ENCODE measurements at regions of chr10 and their contacts with region 1.

Region 1: DNA sequence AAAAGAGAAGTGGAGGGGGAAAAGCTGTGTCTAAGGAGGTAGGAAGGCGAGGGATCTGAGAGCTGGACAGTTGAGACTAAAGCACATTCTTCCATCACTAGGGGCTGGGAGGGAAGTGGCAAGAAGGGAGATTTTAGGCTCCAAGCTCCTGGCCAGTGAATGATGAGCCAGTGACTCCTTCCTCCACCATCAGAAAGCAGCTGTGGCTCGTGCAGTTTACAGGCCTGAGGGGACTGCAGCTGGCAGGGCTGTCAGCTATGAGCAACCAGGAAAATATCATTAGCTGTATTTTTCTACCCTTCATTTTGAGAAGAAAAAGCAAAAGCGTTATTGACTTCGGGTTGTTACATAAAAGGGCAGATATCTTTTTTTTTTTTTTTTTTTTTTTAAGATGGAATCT is 60.7 kb downstream of the GPAM start:
- DNase-seq: no peak
- ATAC-seq: no peak
- H3K4me3 ChIP-seq: no peak overlapping the region
- H3K27ac ChIP-seq: no peak overlapping the region
- H3K4me1 ChIP-seq: no peaks in the 10 kb centered on the region
- H3K27me3 ChIP-seq: no peaks in the 10 kb centered on the region
- CTCF ChIP-seq: no peak

Region 2: DNA sequence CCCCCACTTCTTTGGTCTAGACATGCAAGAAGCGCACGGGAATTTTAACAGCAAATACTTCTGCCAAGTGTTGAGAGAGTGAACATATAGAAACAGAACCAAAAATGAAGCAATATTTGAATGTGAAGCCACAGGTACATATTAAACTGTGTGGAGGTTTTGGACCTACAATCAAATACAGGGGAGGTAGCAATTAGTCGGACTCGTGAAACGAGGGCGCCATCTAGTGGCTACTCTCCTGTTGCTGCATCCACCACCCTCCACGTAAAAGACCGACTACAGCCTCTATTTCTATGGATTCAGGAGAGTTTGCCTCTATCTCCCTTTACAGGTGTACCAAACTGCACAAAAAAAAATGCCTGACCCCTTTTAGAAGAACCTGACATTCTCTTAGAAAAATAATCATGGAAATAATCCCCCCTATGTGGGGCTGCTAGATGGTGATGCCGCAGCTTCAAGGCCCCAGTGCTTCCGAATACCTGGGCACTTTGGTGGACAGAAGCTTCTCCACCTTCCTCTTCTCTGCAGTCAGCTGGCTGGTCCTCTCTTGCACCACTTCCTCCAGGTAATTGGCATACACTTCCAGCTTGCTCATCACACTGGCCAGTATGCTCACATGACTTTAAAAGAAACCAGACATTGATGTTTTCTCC is 192.1 kb after region 1 on chr10:
- intact Hi-C with region 1: loop called in 1 of 3 experiments (anchors 10 kb)
- DNase-seq: peak; percentile 52 to 87 (median 78)
- ATAC-seq: peak; percentile 71 to 96 (median 92)
- H3K4me3 ChIP-seq: no peak overlapping the region
- H3K27ac ChIP-seq: no peak overlapping the region
- H3K4me1 ChIP-seq: no peaks in the 10 kb centered on the region
- H3K27me3 ChIP-seq: no peaks in the 10 kb centered on the region
- CTCF ChIP-seq: peak; percentile 72 to 92 (median 88)